ENCODE measurements at regions of chr15 and their contacts with region 1.

Region 1: DNA sequence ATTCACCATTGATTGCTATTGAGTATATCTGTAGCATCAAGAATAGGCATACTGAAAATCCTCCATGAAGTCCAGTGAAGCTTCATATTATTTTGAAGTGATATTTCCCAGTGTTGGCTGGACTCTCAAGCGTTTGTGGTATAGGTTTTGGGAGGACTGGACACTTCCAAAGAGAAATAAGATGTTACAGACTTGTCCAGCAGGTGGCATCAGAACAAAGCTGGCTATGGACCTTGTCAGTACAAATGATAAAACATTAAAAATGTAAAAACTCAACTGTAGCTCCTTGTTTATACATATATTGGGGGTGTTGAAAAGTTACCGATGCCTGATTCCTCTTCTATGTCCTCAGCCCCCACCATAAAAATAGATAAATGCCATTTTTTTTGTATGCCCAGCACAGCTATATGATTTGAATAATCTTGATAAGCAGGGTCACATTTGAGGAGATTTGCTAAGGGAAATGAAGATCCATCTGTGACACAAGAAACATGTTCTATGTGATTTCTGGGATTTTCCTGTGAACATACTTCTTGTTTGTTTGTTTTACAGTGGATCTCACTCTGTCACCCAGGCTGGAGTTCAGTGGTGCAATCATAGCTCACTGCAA is 54.5 kb upstream of the GOLGA6B start:
- DNase-seq: peak; percentile 56
- H3K4me3 Mint-ChIP-seq: no peak overlapping the region
- H3K27ac Mint-ChIP-seq: no peak overlapping the region
- H3K4me1 Mint-ChIP-seq: no peaks in the 10 kb centered on the region
- H3K27me3 Mint-ChIP-seq: peaks cover 15% of the 10 kb centered on the region
- CTCF ChIP-seq: peak; percentile 24

Region 2: GRCh38 chr15:72671535-72671934 is 71.6 kb after region 1 on chr15:
- CTCF ChIA-PET with region 1: interaction called, 20 read pairs
- intact Hi-C with region 1: no loop called
- DNase-seq: no peak
- H3K4me3 Mint-ChIP-seq: no peak overlapping the region
- H3K27ac Mint-ChIP-seq: no peak overlapping the region
- H3K4me1 Mint-ChIP-seq: peaks cover 12% of the 10 kb centered on the region
- H3K27me3 Mint-ChIP-seq: peaks cover 17% of the 10 kb centered on the region
- CTCF ChIP-seq: no peak

Region 3: GRCh38 chr15:72749700-72750099 is 149.7 kb after region 1 on chr15:
- CTCF ChIA-PET with region 1: no interaction called
- intact Hi-C with region 1: no loop called
- DNase-seq: no peak
- H3K4me3 Mint-ChIP-seq: no peak overlapping the region
- H3K27ac Mint-ChIP-seq: no peak overlapping the region
- H3K4me1 Mint-ChIP-seq: no peaks in the 10 kb centered on the region
- H3K27me3 Mint-ChIP-seq: no peaks in the 10 kb centered on the region
- CTCF ChIP-seq: no peak

Region 4: DNA sequence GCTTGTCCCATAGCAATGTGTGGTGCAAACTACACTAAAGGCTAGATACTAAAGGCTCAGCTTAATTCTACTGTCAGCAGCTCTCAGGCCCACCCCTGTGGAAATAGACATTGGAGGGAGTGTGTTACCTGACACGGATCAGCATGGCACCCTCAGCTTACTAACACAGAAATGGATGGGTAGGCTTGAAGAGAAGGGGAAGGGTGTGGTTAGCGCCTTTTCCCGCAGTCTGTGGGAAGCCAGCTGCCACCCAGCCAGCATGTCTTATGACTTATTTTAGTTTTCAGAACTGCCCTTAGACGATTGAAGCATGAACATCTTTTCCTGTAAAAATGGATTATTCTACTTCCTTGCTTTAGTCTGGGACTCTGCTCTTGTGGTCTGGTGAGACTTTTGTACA is 209.4 kb after region 1 on chr15:
- CTCF ChIA-PET with region 1: no interaction called
- intact Hi-C with region 1: no loop called
- DNase-seq: no peak
- H3K4me3 Mint-ChIP-seq: no peak overlapping the region
- H3K27ac Mint-ChIP-seq: no peak overlapping the region
- H3K4me1 Mint-ChIP-seq: no peaks in the 10 kb centered on the region
- H3K27me3 Mint-ChIP-seq: peaks cover 67% of the 10 kb centered on the region
- CTCF ChIP-seq: no peak

Measured in Calu3 (cell line).